Heart right ventricle (tissue), 16 donors: ENCODE measurements at regions of chr3 and their contacts with region 1.

Region 1: DNA sequence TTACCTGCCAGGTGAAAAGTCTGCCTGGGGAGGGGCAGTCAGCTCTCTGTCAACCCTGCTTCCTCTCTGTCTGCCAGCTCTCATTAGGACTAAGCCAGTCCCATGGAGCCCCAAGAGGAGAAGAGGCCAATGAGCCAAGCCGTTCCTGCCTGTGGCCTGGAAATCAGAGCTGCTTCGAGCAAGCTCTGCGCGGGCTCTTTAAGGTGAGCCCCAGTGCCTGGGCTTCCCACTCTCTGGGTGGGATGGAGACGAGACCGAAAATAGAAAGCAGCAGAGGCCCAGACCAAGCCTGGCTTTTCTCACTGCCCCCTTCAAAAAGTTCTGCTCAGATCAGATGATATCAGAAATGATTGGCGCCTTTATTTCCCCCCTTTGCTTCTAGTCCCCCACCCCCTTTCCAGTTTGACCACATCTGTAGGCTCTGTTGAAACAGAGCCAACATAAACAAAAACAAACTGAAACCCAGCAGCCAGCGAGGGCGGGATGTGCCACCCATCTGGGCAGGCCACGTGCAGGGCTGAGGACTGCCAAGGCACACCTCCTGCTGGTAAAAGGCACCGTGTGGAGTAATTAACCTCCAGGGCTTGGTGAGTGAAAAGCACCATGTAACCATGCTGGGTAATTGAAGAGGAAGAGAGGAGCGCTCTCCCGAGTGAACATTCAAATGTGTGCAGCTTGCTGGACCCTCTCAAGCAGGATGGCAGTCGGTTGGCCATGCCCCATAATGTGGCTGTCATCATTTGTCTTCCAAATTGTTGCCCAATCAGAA is 471.0 kb upstream of the PROK2 start:
- DNase-seq: peak in 1 of 2 donors; percentile 26
- ATAC-seq: peak; percentile 51 to 86 (median 76)
- H3K4me3 ChIP-seq: no peak overlapping the region
- H3K27ac ChIP-seq: peak overlapping the region in 2 of 10 donors; percentile 4 to 19
- H3K4me1 ChIP-seq: peaks cover 5 to 32% (median 27%) of the 10 kb centered on the region in 9 donors
- H3K27me3 ChIP-seq: peaks cover 0 to 4% (median 0%) of the 10 kb centered on the region in 7 donors
- CTCF ChIP-seq: peak in 1 of 9 donors; percentile 16

Region 2: GRCh38 chr3:71710906-71711494 is 545.0 kb before region 1 on chr3:
- intact Hi-C with region 1: loop called in 1 of 10 experiments (anchors 5 kb)
- DNase-seq: no peak
- ATAC-seq: peak in 6 of 8 donors; percentile 43 to 70 (median 60)
- H3K4me3 ChIP-seq: no peak overlapping the region
- H3K27ac ChIP-seq: no peak overlapping the region
- H3K4me1 ChIP-seq: peaks cover 0 to 42% (median 4%) of the 10 kb centered on the region in 9 donors
- H3K27me3 ChIP-seq: no peaks in the 10 kb centered on the region
- CTCF ChIP-seq: peak; percentile 30 to 74 (median 64)

Region 3: DNA sequence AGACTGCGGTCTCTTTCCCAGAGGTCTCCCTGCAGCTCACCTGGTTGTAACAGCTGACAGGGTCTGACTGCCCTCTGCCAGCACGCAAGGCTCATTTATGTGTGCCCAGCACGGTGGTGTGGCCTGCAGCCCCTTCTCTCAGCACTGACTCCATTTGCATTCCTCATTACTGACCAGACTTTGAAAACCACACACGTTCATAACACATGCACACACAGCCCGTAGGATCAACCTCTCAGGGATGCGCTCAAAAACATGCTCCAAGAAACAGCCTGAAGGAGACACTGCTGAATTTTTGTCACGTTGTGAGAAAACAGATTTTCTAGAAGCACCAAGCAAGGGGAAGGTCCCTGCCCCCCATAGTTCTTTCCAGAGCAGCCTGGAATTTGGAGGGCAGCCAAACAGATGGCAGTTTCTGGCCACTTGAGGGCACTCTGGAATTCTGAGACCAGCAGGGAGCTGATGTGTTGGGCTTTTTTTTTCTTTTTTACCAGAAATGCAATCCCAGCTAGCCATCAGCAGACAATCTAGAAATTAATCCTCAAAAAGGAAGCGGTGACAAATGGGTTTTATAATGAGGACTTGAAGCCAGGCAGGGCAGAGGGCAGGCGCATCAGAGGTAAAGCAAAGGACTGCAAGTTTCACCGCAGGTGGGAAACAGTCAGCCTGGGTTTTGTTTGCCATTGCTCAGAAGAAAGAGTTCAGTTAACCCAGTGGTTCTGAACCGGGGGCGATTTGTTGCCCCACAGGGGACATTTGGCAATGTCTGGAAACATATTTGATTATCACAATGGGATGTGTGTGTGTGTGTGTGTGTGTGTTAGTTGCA is 300.5 kb before region 1 on chr3:
- intact Hi-C with region 1: loop called in 7 of 10 experiments (anchors 5 to 10 kb)
- DNase-seq: peak; percentile 59 to 82
- ATAC-seq: peak; percentile 34 to 85 (median 75)
- H3K4me3 ChIP-seq: no peak overlapping the region
- H3K27ac ChIP-seq: no peak overlapping the region
- H3K4me1 ChIP-seq: peaks cover 0 to 13% (median 7%) of the 10 kb centered on the region in 9 donors
- H3K27me3 ChIP-seq: peaks cover 0 to 4% (median 0%) of the 10 kb centered on the region in 7 donors
- CTCF ChIP-seq: peak; percentile 42 to 84 (median 72)

Region 4: GRCh38 chr3:71966185-71966584 is 289.8 kb before region 1 on chr3:
- intact Hi-C with region 1: no loop called
- DNase-seq: no peak
- ATAC-seq: no peak
- H3K4me3 ChIP-seq: no peak overlapping the region
- H3K27ac ChIP-seq: no peak overlapping the region
- H3K4me1 ChIP-seq: no peaks in the 10 kb centered on the region
- H3K27me3 ChIP-seq: peaks cover 0 to 39% (median 5%) of the 10 kb centered on the region in 7 donors
- CTCF ChIP-seq: no peak